Tibial artery (tissue), 4 donors: ENCODE measurements at regions of chr12 and their contacts with region 1.

Region 1: DNA sequence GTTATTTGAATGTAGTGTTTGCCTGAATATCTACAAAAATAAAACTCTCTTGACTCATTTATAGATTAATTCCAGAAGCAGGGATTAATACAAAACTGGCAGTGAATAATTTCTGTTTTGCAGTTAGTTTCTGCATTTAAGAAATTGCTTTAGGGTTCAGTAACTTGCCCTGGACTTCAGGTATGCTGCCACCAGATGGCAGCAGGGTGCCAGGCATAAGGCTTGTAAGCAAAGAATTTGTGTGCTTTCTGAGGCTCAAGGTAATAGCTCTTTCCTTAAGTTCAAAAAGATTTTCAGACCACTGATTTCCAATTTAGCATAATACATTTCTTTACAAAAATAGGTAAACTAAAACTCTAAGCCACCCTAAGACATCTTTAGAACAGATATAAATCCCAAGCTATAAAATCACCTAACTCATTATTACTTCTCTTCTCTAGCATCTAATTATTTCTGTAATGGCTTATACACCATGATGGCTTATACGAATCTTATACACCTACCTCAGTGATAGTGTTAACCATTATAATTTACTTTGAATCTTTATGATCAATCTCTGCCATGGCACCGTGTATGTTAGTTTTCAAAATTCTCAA is 398.3 kb downstream of the APAF1 start:
- DNase-seq: peak in 1 of 2 donors; percentile 73
- H3K4me3 ChIP-seq: no peak overlapping the region
- H3K27ac ChIP-seq: no peak overlapping the region
- H3K4me1 ChIP-seq: no peaks in the 10 kb centered on the region
- H3K27me3 ChIP-seq: no peaks in the 10 kb centered on the region
- CTCF ChIP-seq: peak; percentile 79 to 85

Region 2: GRCh38 chr12:99131751-99132199 is 88.4 kb after region 1 on chr12:
- intact Hi-C with region 1: no loop called
- DNase-seq: no peak
- H3K4me3 ChIP-seq: no peak overlapping the region
- H3K27ac ChIP-seq: no peak overlapping the region
- H3K4me1 ChIP-seq: peaks cover 0 to 3% (median 0%) of the 10 kb centered on the region in 4 donors
- H3K27me3 ChIP-seq: no peaks in the 10 kb centered on the region
- CTCF ChIP-seq: no peak

Region 3: GRCh38 chr12:99767809-99768208 is 724.4 kb after region 1 on chr12:
- intact Hi-C with region 1: loop called (anchors 10 kb)
- DNase-seq: no peak
- H3K4me3 ChIP-seq: peak overlapping the region; percentile 25 to 31
- H3K27ac ChIP-seq: no peak overlapping the region
- H3K4me1 ChIP-seq: peaks cover 0 to 43% (median 17%) of the 10 kb centered on the region in 4 donors
- H3K27me3 ChIP-seq: no peaks in the 10 kb centered on the region
- CTCF ChIP-seq: peak; percentile 43 to 61